PC-3 (cell line): ENCODE measurements at regions of chr7 and their contacts with region 1.

Region 1: DNA sequence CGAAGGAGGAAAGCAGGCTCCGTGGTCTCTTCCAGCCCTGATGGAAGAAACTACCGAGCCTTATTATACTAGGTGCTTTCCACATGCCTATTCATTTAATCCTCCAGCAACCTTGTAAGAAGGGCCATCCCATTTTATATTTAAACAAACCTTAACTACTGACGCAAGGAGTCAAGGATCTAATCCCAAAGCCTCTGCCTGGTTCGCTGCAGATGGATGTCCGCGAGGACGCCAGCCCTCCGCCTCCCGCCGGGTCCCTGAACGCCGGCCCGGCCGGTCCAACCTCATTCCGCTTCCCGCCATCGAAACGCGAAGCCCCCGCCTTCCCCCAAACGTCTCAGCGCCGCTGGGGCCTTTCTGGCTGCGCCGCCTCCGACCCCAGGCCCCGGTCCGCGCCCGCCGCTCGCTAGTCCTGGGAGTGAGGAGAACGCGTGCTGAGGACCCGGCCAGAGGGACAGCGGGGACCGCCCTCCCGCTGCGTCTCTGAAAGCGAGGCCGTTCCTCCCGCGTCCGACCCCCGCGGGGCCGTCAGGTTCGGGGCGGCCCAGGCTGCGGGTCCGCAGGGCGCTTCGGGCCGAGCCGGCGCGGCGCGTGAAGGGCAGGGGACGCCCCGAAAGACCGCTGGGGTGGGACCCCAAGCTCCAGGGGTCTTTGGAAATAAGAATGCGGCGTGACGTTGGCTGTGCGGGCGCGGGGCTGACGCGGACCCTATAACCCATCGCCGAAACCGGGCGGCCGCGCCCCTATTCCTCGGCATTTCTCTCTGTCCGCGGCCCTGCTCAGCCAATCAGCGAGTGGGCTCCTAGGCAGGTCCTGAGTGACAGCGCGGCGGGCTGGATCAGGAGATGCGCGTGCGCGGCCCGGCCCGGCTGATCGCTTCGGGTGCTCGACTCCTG is at the start of gene ATP6V0E2:
- DNase-seq: peak; percentile 93
- ATAC-seq: peak; percentile 91
- H3K4me3 ChIP-seq: peak within 1 kb of the TSS; percentile 92
- H3K27ac ChIP-seq: peak within 1 kb of the TSS; percentile 7
- H3K4me1 ChIP-seq: peaks cover 16% of the 10 kb centered on the region
- H3K27me3 ChIP-seq: no peaks in the 10 kb centered on the region
- CTCF ChIP-seq: no peak; the same call in 1 of the 2 replicates
- total RNA-seq, gene ATP6V0E2: 78.2 and 83.4 TPM in 2 replicates

Region 2: DNA sequence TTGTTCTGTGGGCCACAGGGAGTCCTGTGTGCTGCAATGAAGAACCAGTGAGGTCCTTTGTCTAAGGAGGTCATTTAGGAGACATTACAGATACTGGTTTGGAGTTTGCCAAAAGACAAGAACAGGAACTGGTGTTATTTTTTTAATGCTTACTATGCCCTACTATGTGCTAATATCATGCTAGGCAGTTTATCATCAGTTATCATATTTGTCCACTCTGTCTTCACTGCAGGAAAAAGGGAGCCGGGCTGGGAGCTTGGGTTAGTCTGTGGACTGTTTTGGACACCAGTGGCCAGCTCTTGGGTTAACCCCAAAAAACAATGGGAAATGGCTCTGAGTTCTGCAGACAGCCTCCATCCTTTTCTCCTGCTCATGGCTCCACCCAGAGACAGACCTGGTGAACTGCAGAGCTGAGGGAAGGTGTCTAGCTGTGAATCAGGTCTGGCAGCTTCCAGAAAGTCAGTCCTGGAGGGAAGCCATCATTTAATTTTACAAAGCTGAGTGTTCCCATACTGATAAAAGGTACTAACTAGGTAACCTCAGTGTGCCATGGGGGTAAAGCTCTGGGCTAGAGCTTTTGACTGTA is 274.5 kb before region 1 on chr7:
- CTCF ChIA-PET with region 1: no interaction called
- POLR2A ChIA-PET with region 1: interaction called, 15 read pairs
- intact Hi-C with region 1: no loop called
- DNase-seq: peak; percentile 69
- ATAC-seq: peak; percentile 90
- H3K4me3 ChIP-seq: no peak overlapping the region
- H3K27ac ChIP-seq: no peak overlapping the region
- H3K4me1 ChIP-seq: no peaks in the 10 kb centered on the region
- H3K27me3 ChIP-seq: no peaks in the 10 kb centered on the region
- CTCF ChIP-seq: peak; percentile 70

Region 3: DNA sequence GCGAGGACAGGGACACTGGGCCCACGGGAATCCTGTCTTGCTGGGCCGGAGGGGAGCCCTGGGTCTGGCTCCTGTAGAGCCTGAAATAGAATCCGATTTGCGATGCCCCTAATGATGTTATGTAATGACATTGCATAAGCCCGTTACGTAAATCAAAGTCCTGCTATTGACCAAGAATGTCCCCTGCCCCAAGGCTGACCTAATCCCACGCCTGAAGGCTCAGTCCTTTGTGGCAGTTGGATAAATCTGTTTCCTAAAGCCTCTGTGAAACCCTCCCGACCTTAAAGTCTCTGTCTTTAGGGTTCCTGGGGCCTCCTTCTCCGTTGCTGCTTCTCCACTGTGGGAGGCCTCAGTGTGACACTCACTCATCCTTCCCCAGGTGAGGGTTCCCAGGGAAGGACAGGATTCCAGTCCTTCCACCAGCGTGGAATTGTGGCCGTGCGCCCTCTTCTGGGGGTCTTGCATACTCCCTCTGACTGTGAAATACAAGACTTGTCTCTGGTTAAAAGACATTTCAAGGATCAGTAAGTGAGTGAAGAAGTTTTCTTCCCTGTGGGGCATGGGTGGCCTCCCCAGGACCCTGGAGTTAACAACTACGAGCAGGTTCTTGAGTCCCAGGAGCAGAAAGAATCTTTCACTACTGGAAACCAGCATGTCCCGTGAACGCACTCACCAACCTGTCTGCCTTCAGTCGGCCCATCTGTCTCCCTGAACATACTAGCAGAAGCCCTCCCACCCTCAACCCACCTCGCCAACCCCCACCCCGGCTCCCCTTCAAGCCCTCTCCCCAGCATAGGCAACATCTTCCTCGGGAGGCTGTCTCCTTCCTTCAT is 119.7 kb before region 1 on chr7:
- CTCF ChIA-PET with region 1: no interaction called
- POLR2A ChIA-PET with region 1: no interaction called
- intact Hi-C with region 1: no loop called
- DNase-seq: peak; percentile 44
- ATAC-seq: peak; percentile 86
- H3K4me3 ChIP-seq: no peak overlapping the region
- H3K27ac ChIP-seq: no peak overlapping the region
- H3K4me1 ChIP-seq: no peaks in the 10 kb centered on the region
- H3K27me3 ChIP-seq: no peaks in the 10 kb centered on the region
- CTCF ChIP-seq: peak; percentile 63

Region 4: DNA sequence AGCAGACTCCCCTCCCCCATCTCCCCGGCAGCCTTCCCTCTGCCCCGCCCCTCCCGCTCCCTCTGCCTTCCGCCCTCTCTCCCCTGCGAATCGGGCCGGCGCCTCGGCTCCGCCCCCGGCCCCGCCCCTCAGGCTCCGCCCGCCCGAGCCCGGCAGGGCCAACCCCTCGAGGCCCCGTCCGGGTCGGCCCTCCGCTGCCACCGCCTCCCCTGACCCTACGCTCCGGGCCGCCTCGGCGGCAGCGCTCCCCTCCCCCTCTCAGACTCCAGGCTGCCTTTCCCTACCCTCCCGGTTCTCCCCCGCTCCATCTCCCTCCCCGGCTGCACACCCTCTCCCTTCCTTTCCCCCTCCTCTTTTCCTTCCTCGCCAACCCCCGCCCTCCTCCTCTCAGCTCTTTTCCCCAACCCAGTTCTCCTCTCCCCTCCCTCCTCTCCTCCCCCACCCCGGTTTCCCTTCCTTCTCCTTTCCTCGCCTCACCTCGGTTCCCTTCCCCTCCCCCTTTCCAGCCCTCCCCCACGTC is 101.5 kb before region 1 on chr7:
- CTCF ChIA-PET with region 1: no interaction called
- POLR2A ChIA-PET with region 1: no interaction called
- intact Hi-C with region 1: loop called (anchors 2 kb)
- DNase-seq: peak; percentile 92
- ATAC-seq: peak; percentile 77
- H3K4me3 ChIP-seq: peak overlapping the region; percentile 61
- H3K27ac ChIP-seq: no peak overlapping the region
- H3K4me1 ChIP-seq: peaks cover 7% of the 10 kb centered on the region
- H3K27me3 ChIP-seq: no peaks in the 10 kb centered on the region
- CTCF ChIP-seq: no peak

Region 5: GRCh38 chr7:149838224-149838947 is 34.9 kb before region 1 on chr7 and contains the start of gene ZNF862:
- CTCF ChIA-PET with region 1: no interaction called
- POLR2A ChIA-PET with region 1: no interaction called
- intact Hi-C with region 1: loop called (anchors 1 kb)
- DNase-seq: peak; percentile 96
- ATAC-seq: peak; percentile 97
- H3K4me3 ChIP-seq: peak within 1 kb of the TSS; percentile 84
- H3K27ac ChIP-seq: no peak within 1 kb of the TSS
- H3K4me1 ChIP-seq: peaks cover 11% of the 10 kb centered on the region
- H3K27me3 ChIP-seq: no peaks in the 10 kb centered on the region
- CTCF ChIP-seq: no peak
- total RNA-seq, gene ZNF862: 3.0 and 15.1 TPM in 2 replicates